Breast epithelium (tissue), 4 donors: ENCODE measurements at regions of chr1 and their contacts with region 1.

Region 1: GRCh38 chr1:154558575-154559465 is at the start of gene UBE2Q1:
- DNase-seq: peak; percentile 99
- H3K4me3 ChIP-seq: peak within 1 kb of the TSS; percentile 91 to 94 (median 93)
- H3K27ac ChIP-seq: peak within 1 kb of the TSS; percentile 83 to 97
- H3K4me1 ChIP-seq: peaks cover 9 to 17% of the 10 kb centered on the region in 2 donors
- H3K27me3 ChIP-seq: no peaks in the 10 kb centered on the region
- CTCF ChIP-seq: no peak
- POLR2A ChIP-seq: peak; percentile 51
- total RNA-seq, gene UBE2Q1: 27.7 to 33.3 (median 30.2) TPM

Region 2: DNA sequence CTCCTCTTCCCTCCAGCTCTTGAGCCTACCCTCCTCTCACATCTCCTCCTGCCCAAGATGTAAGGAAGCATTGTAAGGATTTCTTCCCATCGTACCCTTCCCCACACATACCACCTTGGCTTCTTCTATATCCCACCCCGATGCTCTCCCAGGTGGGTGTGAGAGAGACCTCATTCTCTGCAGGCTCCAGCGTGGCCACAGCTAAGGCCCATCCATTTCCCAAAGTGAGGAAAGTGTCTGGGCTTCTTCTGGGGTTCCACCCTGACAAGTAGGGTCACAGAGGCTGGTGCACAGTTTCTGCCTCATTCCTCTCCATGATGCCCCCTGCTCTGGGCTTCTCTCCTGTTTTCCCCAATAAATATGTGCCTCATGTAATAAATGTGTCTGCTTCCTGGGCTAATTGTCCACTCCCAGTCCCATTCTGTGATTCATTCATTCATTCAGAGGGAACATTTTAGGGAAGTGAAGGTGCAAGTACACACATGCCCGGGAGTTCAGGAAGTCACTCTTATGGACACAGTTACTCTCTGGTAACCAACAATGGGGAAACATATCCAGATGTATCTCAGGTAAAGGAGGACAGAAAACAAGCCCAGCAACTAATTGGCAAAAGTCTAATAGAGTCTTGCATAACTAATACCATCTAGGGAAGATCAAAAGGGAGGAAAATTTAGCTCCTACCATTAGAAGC is 1586.5 kb before region 1 on chr1:
- intact Hi-C with region 1: loop called (anchors 10 kb)
- DNase-seq: no peak
- H3K4me3 ChIP-seq: no peak overlapping the region
- H3K27ac ChIP-seq: no peak overlapping the region
- H3K4me1 ChIP-seq: no peaks in the 10 kb centered on the region
- H3K27me3 ChIP-seq: no peaks in the 10 kb centered on the region
- CTCF ChIP-seq: no peak
- POLR2A ChIP-seq: no peak

Region 3: DNA sequence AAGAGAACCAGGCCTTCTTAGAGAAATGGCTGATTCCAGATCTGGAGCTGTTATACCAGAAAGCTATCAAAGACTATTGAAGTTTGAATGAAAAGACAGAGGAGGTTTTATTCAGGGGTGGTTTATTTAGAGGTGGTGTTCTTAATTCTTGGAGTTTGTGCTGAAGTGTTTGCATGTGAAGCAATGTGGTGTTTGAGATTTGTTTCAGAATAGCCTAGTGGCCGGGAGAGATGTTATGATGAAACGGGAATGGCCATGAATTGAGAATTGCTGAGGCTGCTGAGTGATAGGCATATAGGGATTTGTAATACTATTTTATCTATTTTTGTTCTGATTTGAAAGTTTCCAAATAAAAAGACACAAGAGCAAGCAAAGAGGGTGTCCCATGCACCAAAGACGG is 46.1 kb before region 1 on chr1:
- intact Hi-C with region 1: no loop called
- DNase-seq: no peak
- H3K4me3 ChIP-seq: no peak overlapping the region
- H3K27ac ChIP-seq: no peak overlapping the region
- H3K4me1 ChIP-seq: no peaks in the 10 kb centered on the region
- H3K27me3 ChIP-seq: no peaks in the 10 kb centered on the region
- CTCF ChIP-seq: no peak
- POLR2A ChIP-seq: no peak

Region 4: GRCh38 chr1:154595621-154596020 is 36.8 kb after region 1 on chr1:
- intact Hi-C with region 1: no loop called
- DNase-seq: no peak
- H3K4me3 ChIP-seq: no peak overlapping the region
- H3K27ac ChIP-seq: no peak overlapping the region
- H3K4me1 ChIP-seq: peaks cover 0 to 3% of the 10 kb centered on the region in 2 donors
- H3K27me3 ChIP-seq: no peaks in the 10 kb centered on the region
- CTCF ChIP-seq: no peak
- POLR2A ChIP-seq: no peak

Region 5: DNA sequence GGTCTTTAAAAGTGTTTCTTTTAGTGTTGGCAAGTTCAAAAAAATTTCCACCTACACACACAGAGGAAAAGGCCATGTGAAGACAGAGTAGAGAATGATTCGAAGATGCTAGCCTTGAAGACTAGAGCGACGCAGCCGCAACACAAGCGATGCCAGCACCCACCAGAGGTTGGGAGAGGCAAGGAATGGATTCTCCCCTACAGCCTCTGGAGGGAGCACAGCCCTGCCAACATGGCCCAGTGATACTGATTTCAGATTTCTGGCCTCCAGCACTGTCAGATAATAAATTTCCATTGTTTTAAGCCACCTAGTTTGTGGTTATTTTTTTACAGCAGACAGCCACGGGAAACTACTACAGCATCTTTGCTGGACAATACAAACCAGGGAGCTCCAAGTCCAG is 56.1 kb after region 1 on chr1:
- intact Hi-C with region 1: no loop called
- DNase-seq: no peak
- H3K4me3 ChIP-seq: no peak overlapping the region
- H3K27ac ChIP-seq: no peak overlapping the region
- H3K4me1 ChIP-seq: peaks cover 0 to 4% of the 10 kb centered on the region in 2 donors
- H3K27me3 ChIP-seq: no peaks in the 10 kb centered on the region
- CTCF ChIP-seq: no peak
- POLR2A ChIP-seq: no peak

Region 6: DNA sequence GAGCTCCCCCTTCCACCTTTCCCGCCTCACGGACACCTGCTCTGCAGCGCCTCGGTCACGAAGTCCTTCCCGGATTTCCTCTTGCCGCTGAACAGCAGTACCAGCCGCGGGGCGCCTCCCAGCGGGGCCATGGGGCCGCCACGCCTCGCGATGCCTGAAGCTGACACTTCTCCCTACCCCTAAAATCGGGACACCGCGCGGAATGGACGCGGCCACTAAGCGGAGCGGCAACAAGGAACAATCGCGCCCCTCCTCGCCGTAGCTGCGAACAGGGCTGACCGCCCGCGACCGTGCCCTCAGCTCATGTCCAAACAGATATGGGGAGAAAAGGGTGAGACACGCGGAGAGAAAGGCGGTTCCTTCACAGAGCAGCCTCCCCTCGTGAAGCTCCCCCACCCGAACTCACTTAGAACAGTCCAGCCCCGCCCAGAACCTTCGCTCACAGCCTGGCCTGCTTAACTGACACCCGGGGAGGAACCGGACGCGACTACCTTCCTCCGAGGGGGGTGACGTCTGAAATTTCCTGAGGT is 377.8 kb after region 1 on chr1 and contains the start of gene PMVK:
- intact Hi-C with region 1: loop called (anchors 10 kb)
- DNase-seq: peak; percentile 95 to 97
- H3K4me3 ChIP-seq: peak within 1 kb of the TSS; percentile 67 to 75 (median 69)
- H3K27ac ChIP-seq: peak within 1 kb of the TSS; percentile 97 to 98
- H3K4me1 ChIP-seq: peaks cover 0 to 9% of the 10 kb centered on the region in 2 donors
- H3K27me3 ChIP-seq: no peaks in the 10 kb centered on the region
- CTCF ChIP-seq: peak in 2 of 3 donors; percentile 10 to 25
- POLR2A ChIP-seq: no peak
- total RNA-seq, gene PMVK: 15.0 to 16.7 (median 16.4) TPM